Activated B cell treated with CpG ODN at 0.5 μM for 24 hours (primary cell): ENCODE measurements at regions of chr14 and their contacts with region 1.

Region 1: DNA sequence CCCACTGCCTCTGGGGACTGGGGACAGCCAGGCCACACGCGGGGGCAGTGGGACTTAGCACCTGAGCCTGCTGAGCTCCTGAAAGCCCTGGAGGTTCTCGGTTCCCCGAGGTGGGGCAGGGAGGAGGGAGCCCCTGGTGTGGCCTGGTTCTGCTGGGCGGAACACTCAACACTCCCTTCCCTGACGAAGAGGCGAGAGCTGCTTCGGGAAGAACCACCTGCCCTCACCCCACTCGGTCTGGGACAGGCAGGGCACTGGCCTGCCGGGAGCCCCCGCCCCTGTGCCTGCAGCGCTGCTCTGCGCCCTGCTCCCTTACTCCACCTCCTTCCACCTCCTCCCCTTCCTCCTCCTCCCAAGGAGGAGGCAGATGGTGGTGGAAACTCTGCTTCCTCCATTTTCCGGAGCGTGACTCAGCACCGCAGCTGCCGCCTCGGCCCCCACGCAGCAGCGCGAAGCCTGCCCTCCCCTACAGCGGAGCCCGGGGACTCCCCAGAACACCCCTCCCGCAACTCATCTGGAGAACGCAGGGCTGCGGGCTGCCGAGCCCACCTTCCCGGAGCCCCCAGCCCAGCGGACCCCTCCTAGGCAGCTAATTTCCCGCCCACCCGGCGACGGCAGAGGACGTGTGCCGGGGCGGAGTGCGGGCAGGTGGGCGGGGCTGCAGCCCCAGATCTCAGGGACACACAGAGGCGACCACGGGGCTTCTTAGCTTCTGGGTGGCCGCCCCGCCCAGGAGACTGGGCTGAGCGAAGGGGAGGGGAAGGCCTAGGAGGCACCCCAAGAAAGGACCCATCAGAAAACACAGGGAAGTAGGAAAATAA is 11.7 kb upstream of the INF2 start:
- DNase-seq: peak; percentile 69
- ATAC-seq: peak; percentile 63
- H3K4me3 Mint-ChIP-seq: peak overlapping the region; percentile 81
- H3K27ac Mint-ChIP-seq: peak overlapping the region; percentile 80
- H3K4me1 Mint-ChIP-seq: peaks cover 52% of the 10 kb centered on the region
- H3K27me3 Mint-ChIP-seq: no peaks in the 10 kb centered on the region
- CTCF ChIP-seq: no peak

Region 2: DNA sequence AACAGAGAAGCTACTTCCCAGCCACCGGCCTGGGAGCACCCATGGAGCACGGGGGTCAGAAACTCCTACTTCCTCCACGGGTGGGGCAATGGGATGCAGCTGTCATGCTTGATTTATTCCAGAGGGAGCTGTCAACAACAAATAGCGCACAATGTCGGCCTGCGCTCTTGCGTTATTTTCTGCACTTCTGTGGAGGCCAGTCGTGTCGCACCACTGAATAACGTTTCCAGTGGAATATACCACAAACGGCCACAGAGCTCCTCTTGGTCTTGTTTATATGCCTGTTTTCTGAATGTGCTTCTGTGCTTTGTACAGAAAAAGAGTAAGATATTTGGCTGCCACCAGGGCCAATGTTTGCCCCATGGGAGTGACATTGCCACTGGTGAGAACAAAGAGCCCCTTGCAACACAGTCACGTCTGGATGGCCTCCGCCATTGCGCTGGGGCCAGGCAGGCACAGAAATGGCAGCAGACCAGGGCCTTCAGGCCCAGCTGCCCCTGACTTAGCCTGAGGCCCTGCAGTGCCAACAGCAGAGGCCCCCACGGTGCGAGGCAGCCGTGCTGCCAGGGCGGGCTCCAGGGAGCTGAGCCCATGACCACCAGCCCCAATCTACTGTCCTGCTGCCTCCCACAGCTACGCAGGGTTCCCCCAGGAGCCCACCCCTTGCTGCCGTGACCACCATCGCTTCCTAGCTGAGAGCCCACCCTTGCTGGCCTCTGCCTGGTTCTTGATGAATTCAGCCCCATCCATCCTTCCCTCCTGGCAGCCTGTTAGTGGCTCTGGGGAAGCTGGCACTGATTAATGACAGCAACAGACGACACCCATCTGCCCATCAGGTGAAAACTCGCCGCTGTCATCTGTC is 44.2 kb before region 1 on chr14:
- CTCF ChIA-PET with region 1: no interaction called
- POLR2A ChIA-PET with region 1: no interaction called
- intact Hi-C with region 1: no loop called
- DNase-seq: no peak
- ATAC-seq: no peak
- H3K4me3 Mint-ChIP-seq: no peak overlapping the region
- H3K27ac Mint-ChIP-seq: no peak overlapping the region
- H3K4me1 Mint-ChIP-seq: no peaks in the 10 kb centered on the region
- H3K27me3 Mint-ChIP-seq: peaks cover 10% of the 10 kb centered on the region
- CTCF ChIP-seq: no peak

Region 3: DNA sequence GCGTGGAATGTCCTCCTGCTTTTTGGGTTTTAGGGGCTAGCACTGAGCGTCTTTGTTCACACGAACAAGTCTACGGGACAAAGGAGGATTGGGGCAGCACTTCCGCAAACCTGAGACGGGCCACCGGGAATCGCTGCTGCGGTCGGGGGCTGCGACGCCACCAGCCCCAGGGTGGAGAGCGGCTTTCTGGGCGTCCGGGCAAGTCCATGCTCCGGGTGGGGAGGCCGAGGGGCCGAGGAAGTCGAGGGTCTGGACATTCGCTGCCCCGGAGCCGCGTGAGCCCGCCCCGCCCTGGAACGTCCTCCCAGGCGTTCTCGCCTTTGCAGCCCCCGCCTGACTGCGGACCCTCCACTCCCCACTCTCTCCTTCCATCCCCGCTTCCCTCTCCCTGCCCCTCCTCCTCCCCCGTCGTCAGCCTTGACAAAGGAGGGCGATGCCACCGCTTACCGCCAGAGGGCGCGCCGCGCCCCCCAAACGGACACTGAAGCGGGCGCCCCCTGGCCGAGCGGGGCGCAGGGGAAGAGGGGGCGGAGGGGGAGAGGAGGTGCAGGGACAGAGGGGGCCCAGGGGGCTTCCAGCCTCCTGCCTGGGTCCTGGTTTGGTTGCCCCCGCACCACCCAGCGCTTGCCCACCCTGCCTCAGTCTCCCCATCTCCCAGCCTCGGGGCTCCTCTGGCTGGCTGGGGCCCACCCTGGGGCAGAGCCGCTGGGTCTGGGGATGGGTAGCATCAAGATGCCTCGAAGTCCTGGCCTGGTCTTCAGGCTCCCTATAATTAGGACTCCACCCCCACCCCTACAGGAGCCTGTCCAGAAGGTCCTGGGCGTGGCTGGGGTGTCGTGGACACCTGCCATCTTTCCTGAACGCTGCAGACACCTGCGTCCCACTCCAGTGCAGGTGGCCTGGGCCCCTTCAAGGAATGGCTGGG is 27.4 kb before region 1 on chr14:
- CTCF ChIA-PET with region 1: interaction called, 9 read pairs
- POLR2A ChIA-PET with region 1: interaction called, 182 read pairs
- intact Hi-C with region 1: loop called (anchors 1 kb)
- DNase-seq: peak; percentile 79
- ATAC-seq: peak; percentile 92
- H3K4me3 Mint-ChIP-seq: peak overlapping the region; percentile 79
- H3K27ac Mint-ChIP-seq: peak overlapping the region; percentile 78
- H3K4me1 Mint-ChIP-seq: peaks cover 60% of the 10 kb centered on the region
- H3K27me3 Mint-ChIP-seq: no peaks in the 10 kb centered on the region
- CTCF ChIP-seq: peak; percentile 37

Region 4: DNA sequence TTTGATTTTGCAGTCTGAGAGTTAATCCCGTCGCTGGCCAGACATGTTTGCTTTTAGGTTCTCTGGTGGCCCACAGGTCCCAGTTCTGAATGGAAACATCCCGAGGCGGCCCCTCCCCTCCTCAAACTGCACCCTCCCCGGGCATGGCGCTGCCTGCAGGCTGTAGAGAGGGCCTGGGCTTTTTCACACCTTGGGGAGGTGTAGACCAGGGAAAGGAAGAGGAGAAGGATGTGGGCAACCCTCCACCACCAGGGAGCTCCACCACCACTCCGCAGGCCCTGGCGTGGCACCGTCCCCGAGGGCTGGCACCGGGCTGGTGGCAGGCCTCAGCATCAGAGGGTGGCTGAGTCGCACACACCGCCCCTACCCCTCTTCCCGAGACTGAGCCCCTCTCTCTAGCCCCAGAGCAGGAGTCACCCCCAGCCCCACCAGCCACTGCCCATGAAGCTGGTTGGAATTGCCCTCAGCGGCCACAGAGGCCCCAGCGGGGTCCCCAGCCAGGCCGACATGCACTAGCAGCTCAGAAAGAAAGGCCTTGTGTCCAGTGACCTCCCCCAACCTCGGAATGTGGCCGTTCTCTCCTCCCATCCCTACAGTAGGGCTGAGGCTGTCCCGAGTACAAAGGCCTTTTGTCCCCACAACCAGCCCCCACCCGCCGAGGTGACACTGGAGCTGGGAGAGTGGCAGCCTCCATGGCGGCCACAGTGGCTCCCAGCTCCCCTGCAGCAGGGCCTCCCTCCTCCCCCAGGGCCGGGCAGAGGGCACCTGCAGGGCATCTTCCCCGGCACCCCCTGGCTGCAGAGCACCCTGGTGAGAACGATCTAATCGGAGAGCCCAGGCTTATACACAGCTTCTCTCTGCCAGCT is 11.8 kb before region 1 on chr14:
- CTCF ChIA-PET with region 1: interaction called, 14 read pairs
- POLR2A ChIA-PET with region 1: interaction called, 182 read pairs
- intact Hi-C with region 1: loop called (anchors 1 kb)
- DNase-seq: no peak
- ATAC-seq: peak; percentile 52
- H3K4me3 Mint-ChIP-seq: peak overlapping the region; percentile 16
- H3K27ac Mint-ChIP-seq: peak overlapping the region; percentile 72
- H3K4me1 Mint-ChIP-seq: peaks cover 55% of the 10 kb centered on the region
- H3K27me3 Mint-ChIP-seq: no peaks in the 10 kb centered on the region
- CTCF ChIP-seq: no peak

Region 5: GRCh38 chr14:104735830-104736642 is 58.3 kb after region 1 on chr14:
- CTCF ChIA-PET with region 1: no interaction called
- POLR2A ChIA-PET with region 1: no interaction called
- intact Hi-C with region 1: no loop called
- DNase-seq: no peak
- ATAC-seq: no peak
- H3K4me3 Mint-ChIP-seq: no peak overlapping the region
- H3K27ac Mint-ChIP-seq: no peak overlapping the region
- H3K4me1 Mint-ChIP-seq: no peaks in the 10 kb centered on the region
- H3K27me3 Mint-ChIP-seq: peaks cover 9% of the 10 kb centered on the region
- CTCF ChIP-seq: no peak

Region 6: DNA sequence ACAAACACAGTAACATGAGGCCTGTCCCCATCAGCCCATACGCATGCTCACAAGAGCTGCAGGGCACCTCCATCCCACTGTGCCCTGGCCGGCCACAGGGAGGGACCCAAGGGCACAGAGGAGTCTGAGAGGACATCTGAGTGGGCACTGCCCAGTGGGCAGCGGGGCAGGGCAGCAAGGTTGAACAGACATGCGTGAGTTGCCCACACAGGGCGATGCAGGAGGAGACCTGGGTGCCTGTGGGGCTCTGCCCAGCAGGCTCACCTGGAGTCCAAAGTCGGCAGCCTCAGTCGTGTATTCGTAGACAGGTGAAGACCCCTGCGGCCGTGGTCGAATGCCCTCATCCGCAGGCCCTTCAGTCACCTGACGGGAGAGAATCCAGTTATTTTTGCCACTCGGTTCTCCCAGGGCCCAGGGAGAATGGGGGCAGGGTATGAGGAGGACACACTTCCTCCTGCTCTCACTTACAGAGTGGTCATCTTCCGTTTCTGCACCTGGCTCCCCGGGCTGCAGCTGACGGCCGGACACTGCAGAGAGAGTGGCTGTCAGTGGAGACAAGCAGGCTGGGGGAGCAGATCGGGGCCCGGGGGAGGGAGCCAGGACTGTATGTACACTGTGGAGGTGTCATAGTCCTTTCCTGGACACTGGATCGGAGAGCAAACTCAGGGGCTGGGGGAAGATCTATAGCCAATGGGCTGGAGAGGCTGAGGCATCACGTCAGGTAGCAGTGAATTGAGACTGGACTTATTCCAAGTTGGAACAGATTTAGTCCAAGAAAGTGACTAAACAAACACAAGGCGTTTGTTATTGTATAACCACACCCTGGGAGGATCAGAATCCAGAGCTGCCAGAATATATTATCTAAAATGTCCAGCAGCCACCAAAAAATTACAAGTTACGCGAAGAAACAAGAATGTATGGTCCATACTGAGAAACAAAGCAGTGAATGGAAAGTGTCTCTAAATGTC is 279.7 kb after region 1 on chr14:
- CTCF ChIA-PET with region 1: no interaction called
- POLR2A ChIA-PET with region 1: no interaction called
- intact Hi-C with region 1: no loop called
- DNase-seq: no peak
- ATAC-seq: no peak
- H3K4me3 Mint-ChIP-seq: no peak overlapping the region
- H3K27ac Mint-ChIP-seq: no peak overlapping the region
- H3K4me1 Mint-ChIP-seq: no peaks in the 10 kb centered on the region
- H3K27me3 Mint-ChIP-seq: peaks cover 9% of the 10 kb centered on the region
- CTCF ChIP-seq: no peak